Activated naive CD4-positive, alpha-beta T cell treated with anti-CD3 and anti-CD28 coated beads for 36 hours (primary cell): ENCODE measurements at regions of chr3 and their contacts with region 1.

Region 1: DNA sequence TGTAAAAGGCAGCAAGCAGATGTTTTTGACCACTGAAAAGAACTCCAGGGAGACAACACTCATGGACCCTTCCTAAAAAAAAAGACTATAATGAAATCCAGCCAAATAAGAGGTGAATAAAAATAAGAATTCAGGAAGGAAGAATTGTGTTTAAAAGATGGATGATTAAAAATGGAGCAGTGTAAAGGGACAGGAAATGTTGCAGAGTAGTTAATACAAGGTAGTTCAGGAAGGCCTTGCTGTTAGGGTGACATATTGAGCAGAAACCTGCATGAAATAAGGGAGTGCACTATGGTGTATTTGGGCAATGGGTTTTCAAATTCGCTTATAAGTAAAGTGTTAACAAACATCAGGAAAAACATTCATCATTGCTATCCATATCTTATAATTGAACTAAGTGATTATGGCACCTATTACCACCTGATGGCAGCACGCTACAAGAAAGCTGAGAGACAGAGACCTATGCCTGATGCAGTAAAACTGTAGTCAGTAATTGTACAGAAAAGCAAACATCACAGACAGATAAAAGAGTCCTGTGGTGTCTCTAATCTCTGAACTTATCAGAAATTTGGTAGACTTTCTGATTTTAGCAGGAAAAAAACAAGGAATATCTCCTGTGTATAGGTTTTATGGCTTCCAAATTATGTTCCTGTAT is 5.8 kb upstream of the DBR1 start:
- DNase-seq: peak; percentile 76
- H3K4me3 Mint-ChIP-seq: no peak overlapping the region
- H3K27ac Mint-ChIP-seq: no peak overlapping the region
- H3K4me1 Mint-ChIP-seq: peaks cover 3% of the 10 kb centered on the region
- H3K27me3 Mint-ChIP-seq: peaks cover 1% of the 10 kb centered on the region

Region 2: GRCh38 chr3:138284957-138285477 is 104.5 kb after region 1 on chr3:
- CTCF ChIA-PET with region 1: interaction called, 5 read pairs
- intact Hi-C with region 1: loop called (anchors 1 kb)
- DNase-seq: peak; percentile 22
- H3K4me3 Mint-ChIP-seq: no peak overlapping the region
- H3K27ac Mint-ChIP-seq: no peak overlapping the region
- H3K4me1 Mint-ChIP-seq: peaks cover 21% of the 10 kb centered on the region
- H3K27me3 Mint-ChIP-seq: no peaks in the 10 kb centered on the region

Region 3: DNA sequence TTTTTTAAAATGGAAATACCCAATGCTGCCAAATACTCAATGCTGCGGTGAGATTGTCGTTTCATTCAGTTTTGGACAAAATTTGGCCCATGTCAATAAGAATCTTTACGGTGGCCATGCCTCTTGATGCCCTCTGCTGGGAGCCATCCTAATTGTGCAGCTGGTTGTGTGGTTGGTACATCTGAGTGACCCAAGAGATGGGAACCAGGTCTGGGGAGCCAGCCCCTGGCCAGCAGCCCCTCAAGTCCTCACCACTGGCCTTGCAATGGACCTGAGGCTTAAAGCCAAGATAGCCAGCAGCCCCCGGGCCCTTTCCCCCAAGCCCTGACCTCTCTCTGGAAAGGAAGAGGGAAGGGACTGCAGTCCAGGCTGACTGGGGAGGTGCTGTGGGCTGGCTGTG is 217.5 kb after region 1 on chr3:
- CTCF ChIA-PET with region 1: interaction called, 5 read pairs
- intact Hi-C with region 1: loop called (anchors 1 kb)
- DNase-seq: peak; percentile 9
- H3K4me3 Mint-ChIP-seq: no peak overlapping the region
- H3K27ac Mint-ChIP-seq: no peak overlapping the region
- H3K4me1 Mint-ChIP-seq: no peaks in the 10 kb centered on the region
- H3K27me3 Mint-ChIP-seq: peaks cover 3% of the 10 kb centered on the region

Region 4: GRCh38 chr3:138426226-138426625 is 245.7 kb after region 1 on chr3:
- CTCF ChIA-PET with region 1: interaction called, 3 read pairs
- intact Hi-C with region 1: loop called (anchors 1 kb)
- DNase-seq: no peak
- H3K4me3 Mint-ChIP-seq: no peak overlapping the region
- H3K27ac Mint-ChIP-seq: no peak overlapping the region
- H3K4me1 Mint-ChIP-seq: no peaks in the 10 kb centered on the region
- H3K27me3 Mint-ChIP-seq: peaks cover 4% of the 10 kb centered on the region

Region 5: DNA sequence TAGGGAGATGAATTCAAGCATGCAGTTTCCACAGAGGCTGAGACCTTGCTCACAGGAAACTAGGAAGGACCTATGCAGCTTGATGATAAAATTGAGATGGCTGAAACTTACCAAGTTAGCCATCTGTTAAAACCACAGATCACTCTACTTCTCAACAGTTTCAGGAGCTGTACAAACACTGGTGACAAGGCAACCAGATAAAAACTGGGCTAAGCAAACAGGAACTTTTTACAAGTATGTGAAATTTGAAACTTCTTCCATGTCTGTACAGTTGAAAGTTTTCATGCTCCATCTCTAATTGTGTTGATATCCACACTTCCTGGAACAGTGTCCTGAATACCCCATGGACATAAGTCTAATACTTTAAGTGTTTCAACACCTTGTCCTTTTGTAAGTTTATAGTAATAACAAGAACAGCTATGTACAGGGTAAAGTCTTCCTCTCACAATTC is 506.3 kb after region 1 on chr3:
- CTCF ChIA-PET with region 1: no interaction called
- intact Hi-C with region 1: loop called (anchors 5 kb)
- DNase-seq: no peak
- H3K4me3 Mint-ChIP-seq: no peak overlapping the region
- H3K27ac Mint-ChIP-seq: peak overlapping the region; percentile 61
- H3K4me1 Mint-ChIP-seq: peaks cover 15% of the 10 kb centered on the region
- H3K27me3 Mint-ChIP-seq: no peaks in the 10 kb centered on the region